Vagina (tissue), 2 donors: ENCODE measurements at regions of chr15 and their contacts with region 1.

Region 1: DNA sequence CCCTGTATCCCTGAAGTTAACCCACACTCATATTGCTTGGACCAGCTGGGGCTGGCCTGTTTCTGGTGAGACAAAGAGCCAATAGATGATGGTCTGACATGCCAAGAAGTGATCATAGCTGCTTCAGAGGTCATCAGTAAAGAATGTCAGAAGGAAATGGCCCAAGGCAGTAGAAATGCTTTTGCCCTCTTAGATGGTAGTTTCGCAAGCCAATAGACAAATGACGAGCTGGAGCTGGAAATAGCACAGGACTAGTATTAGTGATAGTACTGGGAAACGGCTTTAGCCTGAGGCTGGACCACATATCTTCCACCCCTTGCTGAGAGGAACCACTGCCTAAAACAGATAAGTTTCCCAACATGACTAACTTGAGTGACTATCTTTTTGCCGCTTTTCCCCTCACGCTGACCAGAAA is 176.1 kb upstream of the THBS1 start:
- DNase-seq: no peak
- H3K4me3 ChIP-seq: no peak overlapping the region
- H3K27ac ChIP-seq: no peak overlapping the region
- H3K4me1 ChIP-seq: no peaks in the 10 kb centered on the region
- H3K27me3 ChIP-seq: no peaks in the 10 kb centered on the region
- CTCF ChIP-seq: no peak
- POLR2A ChIP-seq: no peak

Region 2: DNA sequence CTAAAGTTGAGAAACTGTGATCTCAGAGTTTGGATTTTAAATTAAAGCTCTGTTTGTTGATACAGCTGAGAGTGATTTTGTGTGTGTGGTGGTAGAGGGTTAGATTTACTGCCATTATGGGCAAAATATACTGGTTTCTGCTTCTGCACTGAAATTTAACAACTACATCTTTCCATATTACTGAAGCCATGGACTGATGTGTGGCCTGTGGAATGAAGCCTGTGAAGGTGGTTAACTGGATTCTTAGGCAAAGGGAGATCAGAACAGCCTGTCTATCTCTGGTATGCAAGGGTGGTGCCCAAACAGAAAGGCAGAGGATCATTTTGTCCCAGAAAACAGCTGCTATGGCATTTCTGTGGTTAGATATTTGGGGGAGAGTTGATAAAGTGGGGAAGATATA is 121.2 kb before region 1 on chr15:
- intact Hi-C with region 1: no loop called
- DNase-seq: no peak
- H3K4me3 ChIP-seq: no peak overlapping the region
- H3K27ac ChIP-seq: no peak overlapping the region
- H3K4me1 ChIP-seq: peaks cover 5% of the 10 kb centered on the region
- H3K27me3 ChIP-seq: no peaks in the 10 kb centered on the region
- CTCF ChIP-seq: no peak
- POLR2A ChIP-seq: no peak

Region 3: DNA sequence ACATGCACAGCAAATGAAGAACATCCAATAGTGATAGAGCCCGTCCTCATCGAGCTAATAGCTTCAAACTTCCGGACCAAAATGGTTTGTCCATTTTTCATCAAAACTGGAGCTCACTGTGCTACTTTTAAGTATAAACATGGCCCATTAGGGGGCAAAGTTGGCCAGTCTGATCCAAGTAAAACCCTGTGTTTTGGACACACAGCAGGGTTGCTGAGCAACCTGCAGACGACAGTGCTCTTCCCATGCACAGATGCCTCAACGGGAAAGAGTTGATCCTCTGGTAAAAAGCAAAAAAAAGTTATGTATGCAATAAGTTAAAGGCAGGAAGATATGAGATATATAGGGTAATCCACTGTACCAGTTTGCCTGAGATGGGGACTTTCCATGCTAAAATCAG is 67.8 kb before region 1 on chr15:
- intact Hi-C with region 1: loop called (anchors 10 kb)
- DNase-seq: no peak
- H3K4me3 ChIP-seq: no peak overlapping the region
- H3K27ac ChIP-seq: no peak overlapping the region
- H3K4me1 ChIP-seq: peaks cover 8% of the 10 kb centered on the region
- H3K27me3 ChIP-seq: no peaks in the 10 kb centered on the region
- CTCF ChIP-seq: no peak
- POLR2A ChIP-seq: no peak